Posterior cingulate gyrus (tissue), 11 donors: ENCODE measurements at regions of chr7 and their contacts with region 1.

Region 1: DNA sequence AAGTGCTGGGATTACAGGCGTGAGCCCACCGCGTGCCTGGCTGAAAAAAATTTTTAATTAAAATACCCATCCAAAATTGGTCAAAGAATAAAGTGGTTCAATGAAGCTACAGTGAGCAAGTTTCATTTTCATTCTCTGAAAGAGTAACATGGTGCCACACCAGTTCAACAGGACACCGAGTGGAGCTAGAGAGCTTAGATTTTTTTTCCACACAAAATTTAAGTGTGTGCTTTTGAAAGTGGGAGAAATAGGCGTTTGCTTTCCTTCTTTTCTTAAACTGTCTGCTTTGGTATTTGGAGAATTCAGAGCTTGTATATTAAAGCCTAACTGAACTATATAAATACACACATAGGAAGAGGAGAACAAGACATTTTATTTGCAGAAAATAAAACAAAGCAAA is 43.4 kb downstream of the BPGM start:
- DNase-seq: peak in 2 of 10 donors; percentile 12 to 23

Region 2: DNA sequence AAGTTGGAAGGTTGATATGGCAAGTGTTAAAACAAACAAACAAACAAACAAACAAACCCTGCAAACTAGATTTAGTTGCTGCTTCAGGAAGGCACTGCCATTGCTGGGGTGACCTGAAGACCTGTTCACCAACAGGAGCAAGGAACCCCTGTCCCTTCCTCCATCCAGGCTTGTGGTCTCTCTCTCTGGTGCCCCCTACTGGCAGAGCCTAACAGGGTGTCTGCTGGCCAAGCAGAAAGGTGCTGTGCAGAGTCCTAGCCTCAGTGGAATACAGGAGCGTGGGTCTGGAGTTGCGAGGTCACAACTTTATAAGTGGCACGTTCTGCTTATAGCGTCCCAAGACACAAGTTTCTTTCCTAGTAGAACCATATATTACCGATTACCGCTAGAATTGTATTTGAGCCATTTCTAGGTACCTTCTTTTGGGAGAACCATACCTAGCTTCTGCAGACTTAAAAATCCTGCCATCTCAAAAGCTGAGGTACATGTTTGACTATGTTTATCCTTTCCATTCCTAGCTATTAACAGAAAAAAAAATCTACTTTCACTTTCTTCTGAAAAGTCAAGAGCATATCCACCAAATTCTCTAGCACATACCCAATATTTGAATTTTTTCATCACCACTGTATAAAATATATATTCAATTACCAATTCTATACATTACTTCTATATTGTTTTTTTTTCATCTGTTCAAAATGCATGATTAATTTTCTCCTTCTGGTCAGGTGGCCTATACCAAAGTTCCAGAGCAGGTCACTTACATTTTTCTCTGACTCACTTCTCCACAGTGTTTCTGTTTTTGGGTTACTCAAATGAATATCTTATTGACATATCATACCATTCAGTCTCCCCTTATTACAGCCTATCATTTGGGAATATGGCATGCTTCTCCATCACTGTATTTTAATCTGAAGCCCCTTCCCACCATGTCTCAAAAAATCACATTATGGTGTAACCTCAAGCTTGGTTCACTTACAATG is 60.4 kb after region 1 on chr7:
- intact Hi-C with region 1: loop called (anchors 5 kb)
- DNase-seq: peak in 5 of 10 donors; percentile 38 to 88 (median 65)

Region 3: GRCh38 chr7:134891262-134891695 is 201.3 kb after region 1 on chr7:
- intact Hi-C with region 1: loop called (anchors 5 kb)
- DNase-seq: peak; percentile 55 to 96 (median 72)

Region 4: DNA sequence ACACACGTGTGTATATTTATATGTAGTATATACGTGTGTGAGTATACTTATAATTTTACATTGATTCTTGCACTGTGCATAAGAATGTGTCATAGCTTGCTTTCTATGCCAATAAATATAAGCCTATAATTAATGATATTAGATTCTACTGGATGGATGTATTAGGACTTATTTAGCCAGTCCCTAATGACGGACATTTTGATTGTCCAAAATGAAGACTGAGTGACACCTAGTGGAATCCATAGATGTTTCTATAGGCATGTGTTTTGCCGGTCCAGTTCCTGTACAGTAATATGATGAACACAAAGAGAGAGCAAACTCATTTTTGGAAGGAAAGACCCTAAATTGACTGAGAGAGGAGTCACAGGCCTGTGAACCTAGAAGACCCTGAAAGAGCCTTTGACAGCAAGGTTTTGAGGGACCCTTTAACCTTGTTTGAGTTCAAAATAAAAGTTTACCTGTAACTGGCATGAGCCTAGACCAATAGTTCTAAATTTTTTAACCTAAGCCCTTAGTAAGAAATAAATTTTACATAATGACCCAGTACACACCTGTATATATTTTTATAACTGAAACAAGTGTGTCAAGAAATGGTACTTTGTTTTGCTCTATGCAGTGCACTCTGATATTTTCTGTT is 253.9 kb after region 1 on chr7:
- intact Hi-C with region 1: loop called (anchors 2 kb)
- DNase-seq: no peak

Region 5: GRCh38 chr7:134954197-134955082 is 264.4 kb after region 1 on chr7:
- intact Hi-C with region 1: loop called (anchors 2 kb)
- DNase-seq: no peak

Region 6: GRCh38 chr7:135170274-135170997 is 480.4 kb after region 1 on chr7 and contains the start of gene CYREN:
- intact Hi-C with region 1: loop called (anchors 5 kb)
- DNase-seq: peak; percentile 87 to 98 (median 92)